ENCODE measurements at regions of chr7 and their contacts with region 1.

Region 1: GRCh38 chr7:3028071-3028757 is 15.5 kb downstream of the CARD11 start:
- DNase-seq: peak; percentile 58
- H3K4me3 ChIP-seq: no peak overlapping the region; a peak in 1 of 4 replicates
- H3K27ac ChIP-seq: peak overlapping the region in 1 of 2 experiments; percentile 99; a peak in 2 of 4 replicates
- H3K4me1 ChIP-seq: peaks cover 0 to 26% of the 10 kb centered on the region in 2 experiments; a peak in 2 of 4 replicates
- H3K27me3 ChIP-seq: no peaks in the 10 kb centered on the region
- CTCF ChIP-seq: no peak
- EP300 ChIP-seq: peak in 1 of 2 experiments; percentile 48; a peak in 1 of 4 replicates
- RAD21 ChIP-seq: peak; percentile 16; the same call in 1 of the 2 replicates

Region 2: GRCh38 chr7:2928613-2929305 is 99.5 kb before region 1 on chr7:
- CTCF ChIA-PET with region 1: interaction called, 7 read pairs
- POLR2A ChIA-PET with region 1: interaction called, 63 read pairs
- DNase-seq: peak; percentile 96
- H3K4me3 ChIP-seq: peak overlapping the region in 1 of 2 experiments; percentile 5; a peak in 1 of 4 replicates
- H3K27ac ChIP-seq: peak overlapping the region in 1 of 2 experiments; percentile 77; a peak in 2 of 4 replicates
- H3K4me1 ChIP-seq: peaks cover 0 to 25% of the 10 kb centered on the region in 2 experiments; a peak in 1 of 4 replicates
- H3K27me3 ChIP-seq: peaks cover 41% of the 10 kb centered on the region
- CTCF ChIP-seq: no peak
- EP300 ChIP-seq: peak in 1 of 2 experiments; percentile 97; a peak in 2 of 4 replicates
- RAD21 ChIP-seq: peak; percentile 24

Region 3: DNA sequence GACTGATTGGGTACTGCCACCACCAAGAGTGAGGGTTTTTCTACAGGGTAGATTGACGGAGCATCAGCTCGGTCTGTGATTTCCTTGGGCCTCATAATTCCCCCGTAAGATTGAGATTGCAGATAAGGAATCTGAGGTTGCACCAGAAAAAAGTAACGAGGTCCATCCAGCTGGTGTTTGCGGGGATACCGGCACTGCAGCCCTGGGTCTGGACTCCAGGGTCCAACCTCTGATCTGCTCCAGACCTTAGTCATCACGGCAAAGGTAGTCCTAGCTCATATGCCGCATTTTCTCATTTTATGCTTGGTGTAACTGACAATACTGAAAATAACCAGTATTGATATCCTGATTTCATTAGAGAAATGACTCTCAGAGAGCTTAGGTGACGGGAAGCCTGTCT is 11.6 kb after region 1 on chr7:
- CTCF ChIA-PET with region 1: interaction called, 11 read pairs
- POLR2A ChIA-PET with region 1: no interaction called
- DNase-seq: peak; percentile 30
- H3K4me3 ChIP-seq: no peak overlapping the region
- H3K27ac ChIP-seq: no peak overlapping the region
- H3K4me1 ChIP-seq: no peaks in the 10 kb centered on the region; a peak in 1 of 4 replicates
- H3K27me3 ChIP-seq: no peaks in the 10 kb centered on the region
- CTCF ChIP-seq: no peak
- EP300 ChIP-seq: no peak
- RAD21 ChIP-seq: no peak

Region 4: GRCh38 chr7:3455806-3456595 is 427.8 kb after region 1 on chr7:
- CTCF ChIA-PET with region 1: no interaction called
- POLR2A ChIA-PET with region 1: no interaction called
- DNase-seq: no peak
- H3K4me3 ChIP-seq: no peak overlapping the region
- H3K27ac ChIP-seq: no peak overlapping the region
- H3K4me1 ChIP-seq: no peaks in the 10 kb centered on the region
- H3K27me3 ChIP-seq: no peaks in the 10 kb centered on the region
- CTCF ChIP-seq: no peak
- EP300 ChIP-seq: no peak
- RAD21 ChIP-seq: no peak

Measured in SK-N-SH (cell line).